Activated CD8-positive, alpha-beta memory T cell treated with anti-CD3 and anti-CD28 coated beads, Interleukin-2, amount 10 ng/mL, durations not matched to agents 7 days and 5 days (primary cell): ENCODE measurements at regions of chr7 and their contacts with region 1.

Region 1: GRCh38 chr7:101244375-101245146 is at the start of gene FIS1:
- DNase-seq: peak; percentile 95
- ATAC-seq: peak; percentile 97
- H3K4me3 Mint-ChIP-seq: peak within 1 kb of the TSS; percentile 91
- H3K27ac Mint-ChIP-seq: peak within 1 kb of the TSS; percentile 94
- H3K4me1 Mint-ChIP-seq: peaks cover 31% of the 10 kb centered on the region
- H3K27me3 Mint-ChIP-seq: no peaks in the 10 kb centered on the region
- total RNA-seq, gene FIS1: 86.7 to 117 TPM

Region 2: GRCh38 chr7:101226721-101227120 is 17.8 kb before region 1 on chr7:
- CTCF ChIA-PET with region 1: interaction called, 10 read pairs
- DNase-seq: no peak
- ATAC-seq: no peak
- H3K4me3 Mint-ChIP-seq: no peak overlapping the region
- H3K27ac Mint-ChIP-seq: no peak overlapping the region
- H3K4me1 Mint-ChIP-seq: peaks cover 2% of the 10 kb centered on the region
- H3K27me3 Mint-ChIP-seq: no peaks in the 10 kb centered on the region